ENCODE measurements at regions of chr13 and their contacts with region 1.

Region 1: GRCh38 chr13:32586080-32586900 is at the start of gene PDS5B:
- DNase-seq: peak; percentile 93
- H3K4me3 Mint-ChIP-seq: peak within 1 kb of the TSS; percentile 95
- H3K27ac Mint-ChIP-seq: peak within 1 kb of the TSS; percentile 96
- H3K4me1 Mint-ChIP-seq: peaks cover 45% of the 10 kb centered on the region
- H3K27me3 Mint-ChIP-seq: peaks cover 16% of the 10 kb centered on the region
- total RNA-seq, gene PDS5B: 57.8 and 62.7 TPM in 2 replicates

Region 2: GRCh38 chr13:32315238-32316027 is 270.9 kb before region 1 on chr13 and contains the starts of genes BRCA2 and ZAR1L:
- intact Hi-C with region 1: loop called (anchors 1 kb)
- DNase-seq: peak; percentile 86
- H3K4me3 Mint-ChIP-seq: peak within 1 kb of the TSS; percentile 96
- H3K27ac Mint-ChIP-seq: peak within 1 kb of the TSS; percentile 100
- H3K4me1 Mint-ChIP-seq: peaks cover 48% of the 10 kb centered on the region
- H3K27me3 Mint-ChIP-seq: no peaks in the 10 kb centered on the region
- total RNA-seq, gene BRCA2: 16.7 and 18.9 TPM in 2 replicates
- total RNA-seq, gene ZAR1L: not detected in 2 replicates

Region 3: DNA sequence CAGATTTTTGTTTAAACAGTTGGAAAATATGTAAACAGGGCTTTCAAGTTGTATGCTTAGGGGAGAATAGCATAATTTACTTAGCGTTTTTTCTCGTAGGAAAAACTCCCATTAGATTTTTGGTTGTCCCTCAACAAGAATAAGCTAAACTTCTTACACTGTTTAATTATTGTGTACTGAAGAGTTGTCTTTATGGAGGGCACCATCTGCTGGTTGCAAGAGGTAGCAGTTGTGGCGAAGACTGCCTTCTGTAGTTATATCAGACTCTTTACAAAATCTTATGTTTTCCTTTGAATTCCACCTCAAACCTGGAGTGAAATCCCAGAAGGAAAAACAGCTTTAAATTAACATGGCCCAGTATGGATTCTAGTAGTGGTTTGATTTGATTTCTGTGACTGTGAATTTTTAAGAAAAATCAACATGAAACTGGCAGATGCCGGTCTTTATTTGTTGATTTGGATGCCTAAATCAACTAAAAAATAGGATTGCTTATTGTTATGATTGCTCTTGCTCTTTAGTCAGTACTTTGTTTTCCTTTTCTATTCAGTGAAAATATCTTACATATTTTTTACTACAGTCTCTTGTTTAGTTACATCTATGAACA is 53.3 kb after region 1 on chr13:
- intact Hi-C with region 1: loop called (anchors 1 kb)
- DNase-seq: peak; percentile 25
- H3K4me3 Mint-ChIP-seq: no peak overlapping the region
- H3K27ac Mint-ChIP-seq: no peak overlapping the region
- H3K4me1 Mint-ChIP-seq: peaks cover 34% of the 10 kb centered on the region
- H3K27me3 Mint-ChIP-seq: no peaks in the 10 kb centered on the region

Region 4: DNA sequence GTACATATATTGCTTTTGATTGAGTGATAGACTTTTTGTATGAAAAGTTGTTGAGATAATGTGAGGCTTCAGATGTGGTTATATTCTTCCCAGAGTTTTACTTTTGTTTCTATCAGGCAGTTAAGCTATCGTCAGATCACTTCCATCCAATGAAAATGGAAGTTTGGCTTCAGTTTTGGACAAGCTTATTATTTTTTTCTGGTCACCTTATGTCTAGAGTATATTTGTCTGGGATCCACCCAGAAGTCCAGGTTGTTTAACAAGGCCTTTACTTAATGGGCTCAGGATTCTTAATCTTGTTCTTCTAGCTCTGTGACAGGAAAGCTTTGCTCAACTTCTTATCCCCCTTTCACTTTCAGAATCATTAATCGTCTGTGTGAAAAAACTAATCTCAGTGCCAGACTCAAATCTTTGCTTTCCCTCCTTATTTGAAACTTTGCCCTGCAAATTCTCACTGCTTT is 150.9 kb after region 1 on chr13:
- intact Hi-C with region 1: loop called (anchors 2 kb)
- DNase-seq: no peak
- H3K4me3 Mint-ChIP-seq: peak overlapping the region; percentile 74
- H3K27ac Mint-ChIP-seq: peak overlapping the region; percentile 80
- H3K4me1 Mint-ChIP-seq: peaks cover 38% of the 10 kb centered on the region
- H3K27me3 Mint-ChIP-seq: no peaks in the 10 kb centered on the region

Region 5: DNA sequence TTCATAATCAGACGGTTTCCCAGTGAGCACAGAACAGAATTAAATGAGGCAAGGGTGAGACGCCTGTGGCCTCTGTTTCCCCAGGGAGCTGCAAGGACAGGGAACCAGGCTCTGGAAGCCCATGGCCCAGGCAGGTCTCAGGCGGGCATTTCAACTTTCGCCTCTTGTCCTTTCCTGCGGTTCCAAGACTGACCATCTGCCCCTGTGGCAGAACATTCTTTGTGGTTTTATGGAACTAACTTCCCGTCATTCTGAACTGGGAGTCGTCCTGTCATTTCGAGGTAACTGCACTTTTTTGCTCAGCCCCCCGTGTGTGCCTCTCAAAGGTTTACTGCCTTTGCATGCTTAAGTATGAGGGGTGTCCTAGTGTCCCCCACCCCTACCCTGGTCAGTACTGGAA is 500.8 kb after region 1 on chr13:
- intact Hi-C with region 1: loop called (anchors 5 kb)
- DNase-seq: no peak
- H3K4me3 Mint-ChIP-seq: no peak overlapping the region
- H3K27ac Mint-ChIP-seq: peak overlapping the region; percentile 69
- H3K4me1 Mint-ChIP-seq: peaks cover 20% of the 10 kb centered on the region
- H3K27me3 Mint-ChIP-seq: peaks cover 2% of the 10 kb centered on the region

Region 6: DNA sequence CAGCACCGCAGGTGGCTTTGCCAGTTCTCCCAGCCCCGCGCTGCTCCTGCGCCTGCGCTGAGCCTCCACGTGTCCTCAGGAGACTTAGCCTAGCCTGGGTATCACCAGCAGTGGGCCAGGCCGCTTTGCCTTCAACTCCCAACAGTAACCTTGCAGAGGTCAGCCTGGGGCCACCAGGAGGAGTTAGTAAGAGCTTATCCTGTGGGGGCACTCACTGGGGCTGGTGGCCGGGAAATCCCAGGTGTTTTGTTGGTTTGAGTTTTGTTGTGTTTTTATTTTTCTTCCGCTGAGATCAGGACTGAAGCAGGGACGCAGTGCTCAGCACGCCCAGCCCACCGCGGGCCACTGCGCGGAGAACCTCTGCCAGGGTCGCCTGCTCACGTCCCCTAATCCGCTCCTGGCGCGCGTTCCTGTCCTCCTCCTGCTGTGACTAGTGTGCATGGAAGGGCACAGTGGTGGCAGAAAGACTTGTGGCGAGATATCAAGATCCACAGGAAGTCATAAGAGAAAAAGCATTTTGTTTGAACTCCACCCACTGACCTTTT is 1024.3 kb after region 1 on chr13:
- intact Hi-C with region 1: loop called (anchors 2 kb)
- DNase-seq: peak; percentile 8
- H3K4me3 Mint-ChIP-seq: peak overlapping the region; percentile 82
- H3K27ac Mint-ChIP-seq: peak overlapping the region; percentile 95
- H3K4me1 Mint-ChIP-seq: peaks cover 46% of the 10 kb centered on the region
- H3K27me3 Mint-ChIP-seq: no peaks in the 10 kb centered on the region

Measured in activated T-helper 1 cell treated with anti-CD3 and anti-CD28 coated beads, Interleukin-12 subunit alpha, Interleukin-12 subunit beta, Interleukin-2, Interleukin-4 antibody, amounts not matched to agents 30 ng/mL and 10 ng/mL and 1 ng/mL, durations not matched to agents 14 hours and 24 hours and 36 hours (primary cell).